A549 (cell line): ENCODE measurements at regions of chr11 and their contacts with region 1.

Region 1: DNA sequence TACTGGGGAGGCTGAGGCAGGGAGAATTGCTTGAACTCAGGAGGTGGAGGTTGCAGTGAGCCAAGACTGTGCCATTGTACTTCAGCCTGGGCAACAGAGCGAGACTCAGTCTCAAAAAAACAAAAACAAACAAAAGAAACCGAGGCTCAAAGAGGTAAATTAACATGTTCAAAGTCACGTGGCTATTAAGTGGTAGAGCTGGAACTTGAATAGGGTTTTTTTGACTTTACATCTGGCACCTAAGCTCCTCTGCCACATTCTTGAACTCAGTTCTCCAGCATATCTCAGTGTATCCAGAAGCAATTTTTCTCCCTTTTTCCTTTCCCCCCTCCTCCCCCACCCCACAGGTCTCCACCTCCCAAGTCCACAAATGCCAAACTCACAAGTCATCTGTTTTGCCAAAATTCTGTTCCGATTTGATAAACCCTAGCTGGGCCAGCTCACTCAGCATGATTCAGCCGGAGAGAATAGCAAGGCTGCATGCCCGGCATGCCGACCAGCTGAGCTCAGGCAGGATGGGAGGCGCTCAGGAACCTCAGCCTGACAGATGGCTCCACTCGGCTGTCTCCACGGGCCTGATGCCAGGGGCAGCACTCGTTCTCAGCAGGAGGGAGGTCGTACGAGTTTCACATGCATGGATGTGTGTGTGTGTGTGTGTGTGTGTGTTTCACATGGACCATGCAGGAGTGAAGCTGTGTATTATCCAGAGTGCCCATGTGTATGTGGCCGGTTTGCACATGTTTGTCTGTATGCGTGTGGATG is 63.2 kb upstream of the RRAS2 start:
- DNase-seq: peak; percentile 85 to 88
- ATAC-seq: peak; percentile 97 to 98
- H3K4me3 ChIP-seq: no peak overlapping the region
- H3K27ac ChIP-seq: peak overlapping the region; percentile 75 to 85
- H3K4me1 ChIP-seq: peaks cover 37% of the 10 kb centered on the region
- CTCF ChIP-seq: no peak
- EP300 ChIP-seq: peak in 1 of 2 experiments; percentile 63; a peak in 1 of 5 replicates
- POLR2A ChIP-seq: no peak
- RAD21 ChIP-seq: no peak

Region 2: GRCh38 chr11:14249121-14249963 is 172.9 kb before region 1 on chr11:
- CTCF ChIA-PET with region 1: interaction called, 11 read pairs
- POLR2A ChIA-PET with region 1: no interaction called
- DNase-seq: peak; percentile 33 to 57
- ATAC-seq: peak; percentile 63 to 83
- H3K4me3 ChIP-seq: no peak overlapping the region
- H3K27ac ChIP-seq: no peak overlapping the region
- H3K4me1 ChIP-seq: no peaks in the 10 kb centered on the region
- CTCF ChIP-seq: peak; percentile 96
- EP300 ChIP-seq: no peak
- POLR2A ChIP-seq: no peak
- RAD21 ChIP-seq: peak; percentile 95 to 98

Region 3: GRCh38 chr11:14334893-14335292 is 87.3 kb before region 1 on chr11:
- CTCF ChIA-PET with region 1: interaction called, 10 read pairs
- POLR2A ChIA-PET with region 1: interaction called, 6 read pairs
- DNase-seq: no peak
- ATAC-seq: no peak
- H3K4me3 ChIP-seq: no peak overlapping the region
- H3K27ac ChIP-seq: no peak overlapping the region; a peak in 1 of 6 replicates
- H3K4me1 ChIP-seq: peaks cover 12% of the 10 kb centered on the region; the same call in 2 of the 3 replicates
- CTCF ChIP-seq: no peak
- EP300 ChIP-seq: no peak
- POLR2A ChIP-seq: no peak
- RAD21 ChIP-seq: no peak

Region 4: GRCh38 chr11:14370496-14370895 is 51.7 kb before region 1 on chr11:
- CTCF ChIA-PET with region 1: interaction called, 16 read pairs
- POLR2A ChIA-PET with region 1: no interaction called
- DNase-seq: no peak
- ATAC-seq: no peak
- H3K4me3 ChIP-seq: no peak overlapping the region
- H3K27ac ChIP-seq: no peak overlapping the region
- H3K4me1 ChIP-seq: peaks cover 14% of the 10 kb centered on the region
- CTCF ChIP-seq: no peak
- EP300 ChIP-seq: no peak
- POLR2A ChIP-seq: no peak
- RAD21 ChIP-seq: no peak

Region 5: DNA sequence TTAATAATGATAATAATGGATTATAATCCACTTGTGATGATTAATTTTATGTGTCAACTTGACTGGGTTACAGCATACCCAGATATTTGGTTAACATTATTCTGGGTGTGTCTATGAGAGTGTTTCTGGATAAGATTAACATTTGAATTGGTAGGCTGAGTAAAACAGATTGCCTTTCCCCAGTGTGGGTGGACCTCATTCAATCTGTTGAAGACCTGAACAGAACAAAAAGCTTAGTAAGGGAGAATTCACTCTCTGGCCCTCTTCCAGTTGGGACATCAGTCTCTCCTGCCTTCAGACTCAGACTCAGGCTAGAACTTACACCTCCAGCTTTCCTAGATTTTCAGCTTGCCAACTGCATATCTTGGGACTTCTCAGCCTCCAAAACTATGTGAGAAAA is 26.0 kb before region 1 on chr11:
- CTCF ChIA-PET with region 1: interaction called, 14 read pairs
- POLR2A ChIA-PET with region 1: no interaction called
- DNase-seq: no peak
- ATAC-seq: no peak
- H3K4me3 ChIP-seq: no peak overlapping the region
- H3K27ac ChIP-seq: no peak overlapping the region
- H3K4me1 ChIP-seq: peaks cover under 1% of the 10 kb centered on the region; the same call in 1 of the 3 replicates
- CTCF ChIP-seq: no peak
- EP300 ChIP-seq: no peak
- POLR2A ChIP-seq: no peak
- RAD21 ChIP-seq: no peak